H1 (cell line): ENCODE measurements at regions of chr11 and their contacts with region 1.

Region 1: GRCh38 chr11:125091247-125091876 is 20.1 kb downstream of the TMEM218 start:
- DNase-seq: peak in 1 of 2 experiments; percentile 41
- H3K4me3 ChIP-seq: no peak overlapping the region
- H3K27ac ChIP-seq: no peak overlapping the region
- H3K4me1 ChIP-seq: peaks cover 2 to 12% (median 6%) of the 10 kb centered on the region in 4 experiments; a peak in 6 of 7 replicates
- H3K27me3 ChIP-seq: no peaks in the 10 kb centered on the region
- CTCF ChIP-seq: peak; percentile 38 to 94 (median 74)
- EP300 ChIP-seq: no peak
- POLR2A ChIP-seq: no peak
- RAD21 ChIP-seq: peak; percentile 100

Region 2: GRCh38 chr11:124800226-124800929 is 291.0 kb before region 1 on chr11 and contains the start of gene MSANTD2:
- CTCF ChIA-PET with region 1: no interaction called
- POLR2A ChIA-PET with region 1: no interaction called
- DNase-seq: peak; percentile 29 to 90
- H3K4me3 ChIP-seq: peak within 1 kb of the TSS; percentile 70 to 86 (median 74)
- H3K27ac ChIP-seq: peak within 1 kb of the TSS; percentile 96
- H3K4me1 ChIP-seq: peaks cover 0 to 6% (median under 1%) of the 10 kb centered on the region in 4 experiments; a peak in 3 of 7 replicates
- H3K27me3 ChIP-seq: no peaks in the 10 kb centered on the region
- CTCF ChIP-seq: no peak
- EP300 ChIP-seq: no peak
- POLR2A ChIP-seq: peak; percentile 97 to 98
- RAD21 ChIP-seq: no peak
- total RNA-seq, gene MSANTD2: 15.9 and 17.3 TPM in 2 replicates

Region 3: GRCh38 chr11:124900464-124900863 is 190.9 kb before region 1 on chr11:
- CTCF ChIA-PET with region 1: interaction called, 11 read pairs
- POLR2A ChIA-PET with region 1: no interaction called
- DNase-seq: peak in 1 of 2 experiments; percentile 43
- H3K4me3 ChIP-seq: no peak overlapping the region
- H3K27ac ChIP-seq: no peak overlapping the region
- H3K4me1 ChIP-seq: peaks cover 0 to 2% (median 1%) of the 10 kb centered on the region in 4 experiments; a peak in 3 of 7 replicates
- H3K27me3 ChIP-seq: peaks cover 0 to 6% (median 0%) of the 10 kb centered on the region in 4 experiments; a peak in 3 of 7 replicates
- CTCF ChIP-seq: no peak
- EP300 ChIP-seq: no peak
- POLR2A ChIP-seq: no peak
- RAD21 ChIP-seq: no peak

Region 4: GRCh38 chr11:124983674-124984511 is 107.5 kb before region 1 on chr11:
- CTCF ChIA-PET with region 1: no interaction called
- POLR2A ChIA-PET with region 1: no interaction called
- DNase-seq: no peak
- H3K4me3 ChIP-seq: no peak overlapping the region
- H3K27ac ChIP-seq: no peak overlapping the region
- H3K4me1 ChIP-seq: no peaks in the 10 kb centered on the region
- H3K27me3 ChIP-seq: no peaks in the 10 kb centered on the region
- CTCF ChIP-seq: peak in 2 of 3 experiments; percentile 35 to 61; a peak in 2 of 4 replicates
- EP300 ChIP-seq: no peak
- POLR2A ChIP-seq: no peak
- RAD21 ChIP-seq: no peak; a peak in 1 of 4 replicates

Region 5: DNA sequence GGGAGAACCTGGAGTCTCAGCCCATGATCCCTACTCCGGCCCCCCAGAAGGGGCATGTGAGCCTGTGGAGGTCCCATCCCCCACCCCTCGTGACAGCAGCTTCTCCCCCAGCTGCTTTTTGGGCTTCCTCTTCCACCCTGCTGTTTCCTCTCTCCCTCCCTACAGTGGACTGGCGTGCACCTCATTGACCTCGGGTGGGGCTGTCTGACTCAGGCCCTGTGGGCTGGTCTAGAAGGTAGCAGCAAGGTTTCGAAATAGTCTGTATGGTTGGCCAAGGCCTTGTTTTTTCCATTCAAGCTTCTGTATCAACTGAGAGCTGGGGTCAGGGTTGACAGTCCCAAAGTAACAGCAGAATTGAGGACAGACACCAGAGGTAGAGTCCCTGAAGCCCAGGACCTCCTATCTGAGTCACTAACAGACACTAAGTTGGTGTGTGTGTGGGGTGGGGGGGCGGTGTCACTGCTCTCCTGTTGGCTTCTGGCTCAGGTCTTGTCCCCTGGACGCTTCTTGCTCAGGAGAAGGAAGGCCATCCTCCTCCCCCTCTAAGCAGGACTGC is 20.6 kb before region 1 on chr11:
- CTCF ChIA-PET with region 1: interaction called, 217 read pairs
- POLR2A ChIA-PET with region 1: no interaction called
- DNase-seq: no peak
- H3K4me3 ChIP-seq: no peak overlapping the region
- H3K27ac ChIP-seq: no peak overlapping the region
- H3K4me1 ChIP-seq: peaks cover 0 to 2% (median 0%) of the 10 kb centered on the region in 4 experiments; a peak in 2 of 7 replicates
- H3K27me3 ChIP-seq: no peaks in the 10 kb centered on the region
- CTCF ChIP-seq: no peak
- EP300 ChIP-seq: no peak
- POLR2A ChIP-seq: no peak
- RAD21 ChIP-seq: no peak

Region 6: GRCh38 chr11:125123947-125124617 is 32.7 kb after region 1 on chr11:
- CTCF ChIA-PET with region 1: interaction called, 247 read pairs
- POLR2A ChIA-PET with region 1: no interaction called
- DNase-seq: no peak
- H3K4me3 ChIP-seq: peak overlapping the region in 1 of 4 experiments; percentile 10; a peak in 1 of 8 replicates
- H3K27ac ChIP-seq: no peak overlapping the region
- H3K4me1 ChIP-seq: no peaks in the 10 kb centered on the region
- H3K27me3 ChIP-seq: peaks cover 0 to 6% (median 2%) of the 10 kb centered on the region in 4 experiments; a peak in 4 of 7 replicates
- CTCF ChIP-seq: peak; percentile 54 to 84 (median 69)
- EP300 ChIP-seq: no peak
- POLR2A ChIP-seq: no peak
- RAD21 ChIP-seq: peak; percentile 32 to 47

Region 7: DNA sequence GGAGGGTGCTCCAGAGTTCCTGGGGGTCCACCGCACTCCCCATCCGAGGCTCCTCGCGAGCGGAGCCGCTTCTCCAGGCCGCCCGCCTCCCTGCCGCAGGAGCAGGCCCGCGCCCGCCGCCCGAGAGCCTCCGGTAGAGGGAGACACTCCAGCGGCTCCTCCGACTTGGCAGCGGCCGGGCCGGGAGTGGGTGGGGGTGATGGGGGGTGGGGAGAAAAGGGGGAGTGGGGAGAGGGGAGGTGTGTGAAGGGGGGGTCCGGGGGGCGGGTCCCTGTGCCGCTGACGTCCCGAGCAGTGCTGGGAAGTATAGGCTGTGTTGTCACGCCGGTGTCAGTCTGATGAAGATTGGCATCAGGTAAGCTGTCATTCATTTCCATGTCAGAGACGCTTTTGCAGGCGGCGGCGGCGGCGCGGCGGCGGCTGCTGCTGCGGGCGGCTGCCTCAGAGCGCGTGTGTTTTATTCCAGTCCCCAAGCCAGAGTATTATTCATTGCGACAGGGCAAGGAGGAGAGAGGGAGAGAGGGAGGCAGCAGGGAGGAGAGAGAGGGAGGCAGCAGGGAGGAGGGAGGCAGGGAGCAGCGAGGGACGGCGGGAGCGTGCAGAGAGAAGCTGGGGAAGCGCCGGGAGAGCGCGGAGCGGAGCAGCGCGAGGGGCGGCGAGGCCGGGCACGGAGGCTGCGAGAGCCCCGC is 73.2 kb after region 1 on chr11 and contains the start of gene PKNOX2:
- CTCF ChIA-PET with region 1: interaction called, 15 read pairs
- POLR2A ChIA-PET with region 1: interaction called, 4 read pairs
- DNase-seq: peak in 1 of 2 experiments; percentile 93
- H3K4me3 ChIP-seq: peak within 1 kb of the TSS; percentile 52 to 74 (median 60)
- H3K27ac ChIP-seq: peak within 1 kb of the TSS; percentile 87
- H3K4me1 ChIP-seq: peaks cover 21 to 44% (median 29%) of the 10 kb centered on the region in 4 experiments
- H3K27me3 ChIP-seq: peaks cover 14 to 44% (median 40%) of the 10 kb centered on the region in 4 experiments
- CTCF ChIP-seq: peak; percentile 45 to 72 (median 67)
- EP300 ChIP-seq: peak in 1 of 2 experiments; percentile 6; a peak in 1 of 3 replicates
- POLR2A ChIP-seq: no peak
- RAD21 ChIP-seq: peak; percentile 54 to 68; a peak in 3 of 4 replicates
- total RNA-seq, gene PKNOX2: 1.9 and 2.0 TPM in 2 replicates

Region 8: GRCh38 chr11:125200441-125200840 is 109.1 kb after region 1 on chr11:
- CTCF ChIA-PET with region 1: no interaction called
- POLR2A ChIA-PET with region 1: no interaction called
- DNase-seq: no peak
- H3K4me3 ChIP-seq: no peak overlapping the region
- H3K27ac ChIP-seq: no peak overlapping the region
- H3K4me1 ChIP-seq: peaks cover 11 to 29% (median 21%) of the 10 kb centered on the region in 4 experiments
- H3K27me3 ChIP-seq: peaks cover 0 to 2% (median 0%) of the 10 kb centered on the region in 4 experiments; a peak in 2 of 7 replicates
- CTCF ChIP-seq: no peak
- EP300 ChIP-seq: no peak
- POLR2A ChIP-seq: no peak
- RAD21 ChIP-seq: no peak

Region 9: DNA sequence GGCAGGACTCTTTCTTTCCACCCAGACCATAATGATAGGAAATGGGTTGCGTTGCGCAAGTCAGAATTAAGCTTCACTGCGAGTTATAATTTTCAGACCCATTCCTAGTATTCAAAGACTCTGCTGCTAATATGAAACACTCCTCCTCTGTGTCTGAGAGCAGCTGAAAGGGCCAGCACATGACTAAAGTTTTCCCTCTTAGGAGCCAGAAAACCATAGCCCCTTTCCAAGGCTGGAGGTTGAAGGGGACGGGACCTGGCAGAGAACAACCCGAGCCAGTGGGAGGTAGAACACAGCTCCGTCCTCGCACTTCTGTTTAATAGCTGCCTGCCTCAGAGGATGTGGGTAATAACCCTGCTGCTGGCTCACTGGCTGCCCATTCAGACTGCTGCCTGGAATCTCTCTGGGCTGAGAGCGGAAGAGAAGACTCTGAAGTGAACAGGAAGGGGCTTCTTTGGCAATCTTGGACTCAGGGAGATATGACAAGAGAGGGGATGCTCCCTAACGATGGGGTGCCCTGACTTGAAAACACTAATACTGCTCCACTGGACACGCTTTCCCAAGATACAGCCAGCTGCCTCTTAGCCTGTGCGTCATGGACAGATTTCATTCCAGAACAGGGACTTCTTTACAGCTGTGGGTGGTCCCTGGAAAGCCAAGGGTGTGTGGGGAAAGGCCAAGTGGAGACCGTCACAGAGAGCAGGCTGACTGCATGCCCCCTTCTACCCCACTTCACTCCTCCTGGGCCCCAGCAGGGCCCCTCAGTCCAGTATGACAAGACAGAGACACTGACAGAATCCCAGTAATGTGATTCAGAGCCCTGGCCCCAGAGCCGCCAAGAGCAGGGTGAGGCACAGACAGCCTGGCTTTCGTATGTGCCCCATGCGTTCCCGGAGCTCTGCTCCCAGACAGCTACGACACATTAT is 247.8 kb after region 1 on chr11:
- CTCF ChIA-PET with region 1: interaction called, 486 read pairs
- POLR2A ChIA-PET with region 1: no interaction called
- DNase-seq: no peak
- H3K4me3 ChIP-seq: no peak overlapping the region
- H3K27ac ChIP-seq: no peak overlapping the region
- H3K4me1 ChIP-seq: peaks cover 0 to 16% (median 3%) of the 10 kb centered on the region in 4 experiments; a peak in 6 of 7 replicates
- H3K27me3 ChIP-seq: peaks cover 0 to 5% (median 0%) of the 10 kb centered on the region in 4 experiments; a peak in 1 of 7 replicates
- CTCF ChIP-seq: no peak
- EP300 ChIP-seq: no peak
- POLR2A ChIP-seq: no peak
- RAD21 ChIP-seq: no peak

Region 10: DNA sequence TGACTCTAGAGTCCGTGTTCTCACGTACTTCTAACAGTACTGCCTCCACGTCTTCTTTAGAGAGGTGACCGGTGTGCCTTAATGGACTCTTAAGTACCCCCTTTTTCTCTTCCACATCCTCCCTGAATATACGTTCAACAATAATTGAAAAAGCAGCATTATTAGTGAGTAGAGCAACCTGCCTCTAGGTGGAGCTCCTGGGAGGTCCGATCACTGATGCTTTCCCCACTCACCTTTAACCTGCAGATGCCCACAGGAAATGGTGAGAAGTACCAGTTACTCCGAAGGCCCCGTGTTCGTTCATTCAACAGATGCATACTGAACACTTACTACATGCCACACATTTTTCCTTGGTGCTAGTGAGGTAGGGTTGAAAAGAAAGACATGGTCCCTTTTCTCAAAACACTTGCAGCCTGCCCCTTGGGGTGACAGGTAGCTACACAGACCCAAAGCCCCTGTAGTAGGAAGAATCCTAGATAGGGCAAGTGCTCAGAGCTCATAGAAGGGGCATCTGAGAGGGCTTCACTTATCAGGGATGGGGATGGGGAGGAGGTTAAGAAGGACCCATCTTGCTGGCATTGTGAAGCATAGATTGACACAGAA is 332.0 kb after region 1 on chr11:
- CTCF ChIA-PET with region 1: interaction called, 103 read pairs
- POLR2A ChIA-PET with region 1: no interaction called
- DNase-seq: no peak
- H3K4me3 ChIP-seq: no peak overlapping the region
- H3K27ac ChIP-seq: no peak overlapping the region
- H3K4me1 ChIP-seq: peaks cover 0 to 4% (median under 1%) of the 10 kb centered on the region in 4 experiments; a peak in 3 of 7 replicates
- H3K27me3 ChIP-seq: no peaks in the 10 kb centered on the region
- CTCF ChIP-seq: peak; percentile 54 to 80 (median 59)
- EP300 ChIP-seq: no peak
- POLR2A ChIP-seq: no peak
- RAD21 ChIP-seq: peak; percentile 40 to 47; a peak in 3 of 4 replicates